Heart right ventricle (tissue), 16 donors: ENCODE measurements at regions of chr13 and their contacts with region 1.

Region 1: DNA sequence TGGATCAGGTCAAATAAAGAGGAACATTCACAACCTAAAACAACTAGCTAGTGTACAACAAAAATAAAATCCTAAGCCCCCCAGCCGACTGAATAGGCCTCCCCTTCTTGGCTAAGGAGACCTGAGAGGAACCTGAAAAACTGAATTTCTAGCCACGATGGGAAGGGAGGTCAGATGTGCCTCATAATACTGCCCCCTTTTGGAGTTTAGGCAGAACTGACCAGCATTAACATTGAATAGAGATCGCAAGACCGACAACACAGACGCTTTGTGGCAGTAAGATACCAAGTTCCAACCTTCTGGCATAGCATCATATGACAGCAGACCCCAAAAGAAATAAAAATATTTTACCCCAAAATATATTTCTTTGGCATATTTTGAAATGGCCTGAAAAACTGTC is 15.9 kb downstream of the CBY2 start:
- DNase-seq: no peak
- ATAC-seq: no peak
- H3K4me3 ChIP-seq: no peak overlapping the region
- H3K27ac ChIP-seq: no peak overlapping the region
- H3K4me1 ChIP-seq: no peaks in the 10 kb centered on the region
- H3K27me3 ChIP-seq: peaks cover 0 to 6% (median 0%) of the 10 kb centered on the region in 7 donors
- CTCF ChIP-seq: peak in 4 of 9 donors; percentile 18 to 48 (median 24)

Region 2: GRCh38 chr13:45768656-45769479 is 50.8 kb after region 1 on chr13:
- intact Hi-C with region 1: loop called in 1 of 10 experiments (anchors 5 kb)
- DNase-seq: no peak
- ATAC-seq: no peak
- H3K4me3 ChIP-seq: no peak overlapping the region
- H3K27ac ChIP-seq: no peak overlapping the region
- H3K4me1 ChIP-seq: peaks cover 0 to 4% (median 0%) of the 10 kb centered on the region in 9 donors
- H3K27me3 ChIP-seq: peaks cover 0 to 4% (median 0%) of the 10 kb centered on the region in 7 donors
- CTCF ChIP-seq: no peak